BJ (cell line): ENCODE measurements at regions of chr20 and their contacts with region 1.

Region 1: GRCh38 chr20:34579191-34579978 is 20.9 kb downstream of the MAP1LC3A start:
- DNase-seq: no peak
- H3K4me3 ChIP-seq: no peak overlapping the region
- H3K27me3 ChIP-seq: no peaks in the 10 kb centered on the region
- CTCF ChIP-seq: peak; percentile 78

Region 2: GRCh38 chr20:34491226-34491931 is 88.0 kb before region 1 on chr20:
- CTCF ChIA-PET with region 1: no interaction called
- POLR2A ChIA-PET with region 1: no interaction called
- DNase-seq: no peak
- H3K4me3 ChIP-seq: no peak overlapping the region
- H3K27me3 ChIP-seq: no peaks in the 10 kb centered on the region
- CTCF ChIP-seq: no peak

Region 3: DNA sequence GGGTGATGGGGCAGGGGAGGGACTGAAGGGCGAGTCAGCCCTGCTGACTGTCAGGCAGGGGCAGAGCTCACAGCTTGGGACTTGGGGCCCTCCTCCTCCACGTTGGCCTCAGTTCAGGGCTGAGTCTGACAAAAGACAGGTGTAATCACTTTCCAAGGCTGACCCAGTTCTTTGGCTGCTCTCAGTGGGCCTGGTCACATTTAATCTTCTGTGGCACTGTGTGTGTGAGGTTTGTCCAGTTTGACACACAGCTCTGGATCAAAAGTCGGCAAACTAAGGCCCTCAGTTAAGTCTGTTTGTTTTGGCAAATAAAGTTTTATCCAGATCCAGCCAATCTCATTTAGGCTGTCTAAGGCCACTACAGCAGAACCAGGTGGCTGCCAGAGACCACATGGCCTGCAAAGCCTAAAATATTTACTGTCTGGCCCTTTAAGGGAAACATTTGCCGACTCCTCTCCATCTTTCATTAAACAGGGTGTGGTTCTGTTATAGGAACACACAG is 26.0 kb before region 1 on chr20:
- CTCF ChIA-PET with region 1: no interaction called
- POLR2A ChIA-PET with region 1: no interaction called
- DNase-seq: no peak
- H3K4me3 ChIP-seq: no peak overlapping the region
- H3K27me3 ChIP-seq: no peaks in the 10 kb centered on the region
- CTCF ChIP-seq: no peak

Region 4: GRCh38 chr20:34595377-34596184 is 16.2 kb after region 1 on chr20:
- CTCF ChIA-PET with region 1: interaction called, 10 read pairs
- POLR2A ChIA-PET with region 1: no interaction called
- DNase-seq: no peak
- H3K4me3 ChIP-seq: no peak overlapping the region
- H3K27me3 ChIP-seq: no peaks in the 10 kb centered on the region
- CTCF ChIP-seq: no peak

Region 5: DNA sequence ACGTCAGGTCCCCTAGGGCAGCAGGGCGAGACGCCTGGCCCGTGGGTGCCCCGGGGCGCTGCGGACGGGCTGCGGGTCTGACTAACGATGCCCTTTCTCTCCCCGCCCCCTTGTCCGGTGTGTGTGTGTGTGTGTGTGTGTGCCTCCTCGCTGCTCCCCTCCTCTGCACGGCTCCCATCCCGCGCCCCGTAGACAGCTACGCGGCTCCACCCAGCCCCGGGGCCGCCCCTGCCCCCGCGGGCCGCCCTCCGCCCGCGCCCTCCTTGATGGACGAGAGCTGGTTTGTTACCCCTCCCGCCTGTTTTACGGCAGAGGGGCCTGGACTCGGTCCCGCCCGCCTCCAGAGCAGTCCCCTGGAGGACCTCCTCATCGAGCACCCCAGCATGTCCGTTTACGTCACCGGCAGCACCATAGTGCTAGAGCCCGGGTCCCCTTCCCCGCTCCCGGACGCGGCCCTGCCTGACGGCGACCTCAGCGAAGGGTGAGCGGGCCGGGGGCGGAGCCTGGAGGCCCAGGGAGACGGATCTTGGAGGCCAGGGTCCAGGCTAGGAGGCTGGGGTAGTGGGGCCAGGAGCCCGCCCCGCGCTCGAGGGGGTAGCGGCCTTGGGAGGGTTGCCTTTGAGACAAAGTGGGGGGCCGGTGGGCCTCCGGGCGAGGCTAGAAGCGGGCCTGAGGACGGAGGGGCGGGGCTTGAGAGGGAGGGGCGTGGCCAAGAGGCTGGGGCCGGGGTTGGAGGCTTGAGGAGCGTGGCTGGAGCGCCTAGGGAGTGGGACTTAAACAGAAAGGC is 129.9 kb after region 1 on chr20:
- CTCF ChIA-PET with region 1: interaction called, 22 read pairs
- POLR2A ChIA-PET with region 1: no interaction called
- DNase-seq: no peak
- H3K4me3 ChIP-seq: peak overlapping the region; percentile 67
- H3K27me3 ChIP-seq: no peaks in the 10 kb centered on the region
- CTCF ChIP-seq: no peak

Region 6: GRCh38 chr20:34768096-34768495 is 188.7 kb after region 1 on chr20:
- CTCF ChIA-PET with region 1: interaction called, 50 read pairs
- POLR2A ChIA-PET with region 1: no interaction called
- DNase-seq: peak; percentile 62
- H3K4me3 ChIP-seq: no peak overlapping the region
- H3K27me3 ChIP-seq: no peaks in the 10 kb centered on the region
- CTCF ChIP-seq: no peak